ENCODE measurements at regions of chr10 and their contacts with region 1.

Region 1: DNA sequence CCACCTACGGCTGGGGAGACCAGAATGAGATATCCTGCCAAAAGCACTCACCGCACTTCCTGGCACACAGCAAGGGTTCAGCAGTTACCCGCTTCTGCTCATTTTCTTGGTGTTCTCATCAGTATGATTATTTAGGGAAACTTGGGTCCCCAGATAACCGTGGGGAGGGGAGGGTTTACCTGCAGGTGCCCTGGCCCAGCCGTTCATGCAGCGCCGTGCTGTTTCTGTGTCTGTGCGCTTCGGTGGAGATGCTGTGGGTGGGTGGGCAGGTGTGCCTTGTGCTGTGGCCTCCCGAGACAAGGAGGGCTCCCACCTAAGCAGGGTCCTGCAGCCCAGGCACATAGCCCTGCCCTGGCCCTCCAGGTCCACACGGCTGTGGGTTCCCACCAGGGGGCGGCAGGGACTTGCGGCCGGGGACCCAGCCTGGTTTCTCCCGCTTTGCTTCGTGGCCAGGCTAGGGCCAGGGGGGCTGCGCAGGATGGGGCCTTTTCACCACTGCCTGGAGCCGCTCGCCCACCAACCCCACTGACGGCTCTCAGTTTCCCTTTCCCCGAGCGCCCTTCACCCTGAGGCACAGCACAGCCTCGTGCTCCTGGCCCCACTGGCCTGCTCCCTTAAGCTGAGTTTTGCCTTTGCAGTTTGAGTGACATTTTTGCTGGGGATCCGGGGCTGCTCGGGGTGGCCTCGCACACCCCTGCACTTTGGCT is 78.5 kb downstream of the LHPP start:
- DNase-seq: peak; percentile 72 to 83 (median 73)
- ATAC-seq: peak; percentile 52 to 91 (median 85)
- H3K4me3 ChIP-seq: peak overlapping the region in 1 of 12 donors; percentile 12
- H3K27ac ChIP-seq: no peak overlapping the region
- H3K4me1 ChIP-seq: peaks cover 0 to 31% (median 4%) of the 10 kb centered on the region in 12 donors
- H3K27me3 ChIP-seq: no peaks in the 10 kb centered on the region
- CTCF ChIP-seq: peak; percentile 71 to 94 (median 86)
- POLR2A ChIP-seq: no peak

Region 2: DNA sequence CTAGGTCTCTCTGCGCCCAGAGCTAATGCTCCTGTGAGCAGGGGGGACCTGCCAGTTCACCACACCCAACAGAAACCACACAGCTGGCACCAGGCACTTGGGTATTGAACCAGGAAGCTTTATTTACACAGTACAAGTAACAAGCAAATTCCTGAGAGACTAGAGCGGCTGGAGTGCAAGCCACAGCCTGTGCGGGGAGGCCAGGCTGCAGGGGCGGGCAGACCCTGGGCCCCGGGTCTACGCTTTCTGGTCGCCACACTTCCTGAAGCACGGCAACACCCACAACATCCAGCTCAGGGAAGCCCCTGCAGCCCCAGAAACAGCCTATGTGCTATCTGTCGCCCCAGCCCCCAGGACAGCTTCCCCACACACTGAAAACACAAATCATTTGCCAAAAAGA is 79.1 kb after region 1 on chr10:
- intact Hi-C with region 1: loop called in 3 of 10 experiments (anchors 5 to 10 kb)
- DNase-seq: no peak
- ATAC-seq: no peak
- H3K4me3 ChIP-seq: no peak overlapping the region
- H3K27ac ChIP-seq: no peak overlapping the region
- H3K4me1 ChIP-seq: peaks cover 0 to 71% (median 32%) of the 10 kb centered on the region in 12 donors
- H3K27me3 ChIP-seq: no peaks in the 10 kb centered on the region
- CTCF ChIP-seq: no peak
- POLR2A ChIP-seq: no peak

Region 3: DNA sequence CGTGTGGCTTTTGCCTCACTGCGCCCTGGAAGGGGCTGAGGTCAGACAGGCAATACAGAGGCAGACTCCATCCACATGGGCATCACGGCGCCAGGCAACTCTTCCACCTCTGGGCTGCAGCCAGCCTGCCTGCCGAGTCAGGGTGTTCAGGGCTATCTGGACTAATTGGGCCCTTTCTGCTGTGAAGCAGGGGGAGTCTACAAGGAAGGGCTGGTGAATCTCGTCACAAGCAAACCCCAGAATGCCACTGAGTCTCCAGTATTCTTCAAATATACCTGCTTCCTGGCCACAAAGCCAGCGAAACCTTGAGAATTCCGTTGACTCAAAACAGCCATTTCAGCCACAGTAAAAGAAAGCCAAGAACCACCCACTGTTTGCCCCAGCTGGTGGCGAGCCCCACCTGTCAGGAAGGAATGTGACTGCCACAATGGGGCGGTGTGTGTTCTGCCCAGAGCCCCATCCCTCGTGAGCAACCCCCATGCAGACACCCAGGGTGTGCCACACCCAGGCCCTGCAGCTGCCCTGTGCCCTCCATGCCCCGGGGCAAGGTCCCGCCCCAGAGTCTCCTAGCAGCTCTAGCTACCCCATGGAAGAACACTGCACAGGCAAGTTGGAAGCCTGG is 86.8 kb after region 1 on chr10:
- intact Hi-C with region 1: loop called in 5 of 10 experiments (anchors 5 to 10 kb)
- DNase-seq: no peak
- ATAC-seq: no peak
- H3K4me3 ChIP-seq: no peak overlapping the region
- H3K27ac ChIP-seq: peak overlapping the region in 5 of 12 donors; percentile 38 to 74 (median 69)
- H3K4me1 ChIP-seq: peaks cover 7 to 99% (median 87%) of the 10 kb centered on the region in 12 donors
- H3K27me3 ChIP-seq: no peaks in the 10 kb centered on the region
- CTCF ChIP-seq: no peak
- POLR2A ChIP-seq: no peak

Region 4: DNA sequence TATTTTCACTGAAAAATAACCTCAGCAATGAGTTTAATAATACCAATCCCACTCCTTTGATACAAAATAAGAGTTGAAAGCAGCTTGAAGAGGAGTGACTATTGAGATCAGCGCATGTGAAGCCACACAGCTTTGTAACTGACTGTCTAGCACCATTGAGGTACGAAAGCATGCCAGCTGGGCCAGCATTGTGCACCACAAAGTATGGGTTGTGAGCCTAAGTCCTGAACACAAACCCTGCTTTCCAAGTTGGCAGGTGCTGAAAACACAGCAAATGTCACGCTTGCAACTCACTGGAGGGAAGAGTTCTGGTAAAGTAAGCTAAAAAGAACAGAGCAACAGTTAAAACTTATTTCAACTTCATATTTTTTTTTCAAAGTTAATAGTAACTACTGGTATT is 208.1 kb after region 1 on chr10:
- intact Hi-C with region 1: loop called in 7 of 10 experiments (anchors 1 to 2 kb)
- DNase-seq: no peak
- ATAC-seq: no peak
- H3K4me3 ChIP-seq: no peak overlapping the region
- H3K27ac ChIP-seq: no peak overlapping the region
- H3K4me1 ChIP-seq: peaks cover 3 to 25% (median 9%) of the 10 kb centered on the region in 12 donors
- H3K27me3 ChIP-seq: no peaks in the 10 kb centered on the region
- CTCF ChIP-seq: no peak
- POLR2A ChIP-seq: no peak

Region 5: GRCh38 chr10:124827474-124827873 is 287.4 kb after region 1 on chr10:
- intact Hi-C with region 1: loop called in 2 of 10 experiments (anchors 5 kb)
- DNase-seq: no peak
- ATAC-seq: no peak
- H3K4me3 ChIP-seq: no peak overlapping the region
- H3K27ac ChIP-seq: no peak overlapping the region
- H3K4me1 ChIP-seq: no peaks in the 10 kb centered on the region
- H3K27me3 ChIP-seq: no peaks in the 10 kb centered on the region
- CTCF ChIP-seq: peak; percentile 42 to 71 (median 54)
- POLR2A ChIP-seq: no peak